ENCODE measurements at regions of chr10 and their contacts with region 1.

Region 1: DNA sequence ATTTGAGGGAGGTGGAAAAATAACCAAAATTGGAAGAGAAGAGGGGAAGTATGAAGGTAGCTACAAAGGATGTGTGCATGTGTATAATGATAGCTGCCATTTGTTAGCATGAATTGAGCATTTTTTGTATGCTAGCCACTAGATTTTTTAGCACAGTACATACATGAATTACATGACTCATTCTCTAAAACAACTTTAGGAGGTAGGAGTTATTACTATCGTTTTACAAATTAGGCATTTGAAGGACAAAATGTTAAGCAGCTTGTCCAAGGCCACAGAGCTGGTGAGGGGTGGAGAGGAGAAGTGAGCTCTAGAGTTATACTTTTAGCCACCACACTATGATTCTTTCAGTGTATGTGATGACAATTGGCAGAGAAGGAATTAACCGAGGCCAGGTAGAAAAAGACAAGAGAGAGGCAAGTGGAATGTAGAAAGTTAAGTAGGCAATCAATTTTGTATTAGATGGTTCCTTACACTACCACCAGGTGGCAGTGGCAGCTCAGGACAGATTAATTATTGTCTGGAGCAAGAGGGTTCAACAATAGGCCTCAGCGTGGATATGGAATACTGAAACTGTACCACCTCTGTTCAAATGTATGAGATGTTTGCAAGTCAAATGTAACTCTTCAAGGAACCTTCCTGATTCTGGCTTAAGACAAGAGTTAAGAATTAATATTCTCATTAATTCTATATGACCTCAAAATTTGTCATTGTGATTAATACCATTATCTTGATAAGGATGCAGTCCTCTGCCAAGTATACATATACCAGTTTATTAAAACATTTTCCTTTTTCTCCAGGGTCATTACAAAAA is 128.0 kb downstream of the MBL2 start:
- DNase-seq: peak; percentile 36
- H3K27ac ChIP-seq: no peak overlapping the region
- CTCF ChIP-seq: peak; percentile 74

Region 2: GRCh38 chr10:52729271-52730104 is 84.9 kb after region 1 on chr10:
- CTCF ChIA-PET with region 1: interaction called, 34 read pairs
- POLR2A ChIA-PET with region 1: no interaction called
- DNase-seq: peak; percentile 52
- H3K27ac ChIP-seq: no peak overlapping the region
- CTCF ChIP-seq: peak; percentile 52

Region 3: DNA sequence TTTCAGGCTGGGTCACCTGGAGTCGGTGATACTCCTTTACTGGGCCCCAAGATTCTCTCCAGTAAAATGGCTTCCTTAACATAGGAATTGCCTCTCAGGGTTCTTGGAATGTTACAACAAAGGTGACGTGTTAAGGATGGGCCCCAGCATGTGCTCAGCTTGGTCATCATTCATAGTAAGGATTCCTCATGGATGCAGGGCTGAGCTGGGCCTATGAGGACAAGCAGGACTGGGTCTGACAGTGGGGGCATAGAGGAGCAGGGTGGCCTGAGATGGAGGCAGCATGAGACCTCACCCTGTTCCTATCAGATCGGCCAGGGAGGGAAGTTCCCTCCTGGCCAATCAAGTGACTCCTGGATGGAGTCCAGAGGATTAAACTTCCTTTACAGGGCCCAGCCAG is 140.8 kb after region 1 on chr10:
- CTCF ChIA-PET with region 1: interaction called, 8 read pairs
- POLR2A ChIA-PET with region 1: interaction called, 10 read pairs
- DNase-seq: no peak
- H3K27ac ChIP-seq: no peak overlapping the region
- CTCF ChIP-seq: no peak